ENCODE measurements at regions of chr1 and their contacts with region 1.

Region 1: GRCh38 chr1:13642306-13643004 is 57.5 kb upstream of the PRDM2 start:
- DNase-seq: no peak
- CTCF ChIP-seq: no peak

Region 2: GRCh38 chr1:13513895-13514546 is 128.4 kb before region 1 on chr1 and contains the start of gene LRRC38:
- in situ Hi-C with region 1: no loop called
- DNase-seq: no peak
- CTCF ChIP-seq: no peak

Region 3: GRCh38 chr1:13570924-13571323 is 71.5 kb before region 1 on chr1:
- in situ Hi-C with region 1: loop called (anchors 10 kb)
- DNase-seq: no peak
- CTCF ChIP-seq: peak; percentile 27

Region 4: GRCh38 chr1:13792419-13792818 is 150.0 kb after region 1 on chr1:
- in situ Hi-C with region 1: no loop called
- DNase-seq: no peak
- CTCF ChIP-seq: no peak

Region 5: DNA sequence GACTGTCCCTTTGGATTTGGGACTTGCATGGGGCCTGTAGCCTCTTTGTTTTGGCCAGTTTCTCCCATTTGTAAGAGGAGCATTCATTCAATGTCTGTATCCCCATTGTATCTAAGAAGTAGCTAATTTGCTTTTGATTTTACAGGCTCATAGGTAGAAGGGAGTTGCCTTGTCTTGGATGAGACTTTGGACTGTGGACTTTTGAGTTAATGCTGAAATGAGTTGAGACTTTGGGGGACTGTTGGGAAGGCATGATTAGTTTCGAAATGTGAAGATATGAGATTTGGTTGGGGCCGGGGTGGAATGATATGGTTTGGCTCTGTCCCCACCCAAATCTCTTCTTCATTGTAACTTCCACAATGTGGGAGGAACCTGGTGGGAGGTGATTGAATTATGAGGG is 209.3 kb after region 1 on chr1:
- in situ Hi-C with region 1: no loop called
- DNase-seq: no peak
- CTCF ChIP-seq: no peak